ENCODE measurements at regions of chr21 and their contacts with region 1.

Region 1: DNA sequence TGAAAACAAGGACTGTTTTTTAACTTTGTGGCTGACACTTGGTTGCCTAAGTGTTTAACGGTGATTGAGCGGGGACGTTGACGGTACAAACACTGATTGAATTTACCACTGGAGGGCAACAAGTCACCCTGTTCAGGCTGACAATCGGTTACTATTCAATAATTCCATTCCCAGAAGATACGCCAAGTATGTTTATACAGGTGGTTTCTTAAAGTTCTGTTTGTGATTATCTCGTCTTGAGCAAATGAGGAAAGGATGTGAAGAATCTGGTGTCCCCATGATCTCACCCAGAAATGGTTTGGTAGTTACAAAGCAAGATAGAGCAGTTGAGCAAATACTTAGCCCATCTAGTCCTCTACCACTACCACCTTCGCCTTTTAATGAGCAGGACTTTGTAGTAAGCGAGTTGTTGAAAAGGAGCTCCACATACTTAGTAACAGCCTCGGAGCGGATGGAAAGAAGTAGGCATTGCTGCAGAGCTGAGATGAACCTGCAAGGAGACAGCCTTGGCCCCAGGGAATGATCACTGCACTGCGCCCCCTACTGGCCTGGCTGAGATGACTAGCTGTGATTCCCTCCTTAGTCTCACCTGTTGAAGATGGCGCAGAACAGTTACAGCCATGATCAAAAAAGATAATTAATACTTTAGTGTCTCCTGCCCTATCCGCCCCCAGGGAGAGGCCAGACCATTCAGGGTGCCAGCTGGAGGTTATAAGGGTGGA is 36.3 kb downstream of the IFNAR1 start:
- DNase-seq: peak; percentile 92
- ATAC-seq: peak; percentile 82
- H3K4me3 Mint-ChIP-seq: peak overlapping the region; percentile 73
- H3K27ac Mint-ChIP-seq: peak overlapping the region; percentile 69
- H3K4me1 Mint-ChIP-seq: peaks cover 17% of the 10 kb centered on the region
- H3K27me3 Mint-ChIP-seq: no peaks in the 10 kb centered on the region
- CTCF ChIP-seq: peak; percentile 97

Region 2: GRCh38 chr21:33157303-33157702 is 203.7 kb before region 1 on chr21:
- CTCF ChIA-PET with region 1: no interaction called
- POLR2A ChIA-PET with region 1: no interaction called
- intact Hi-C with region 1: no loop called
- DNase-seq: no peak
- ATAC-seq: no peak
- H3K4me3 Mint-ChIP-seq: no peak overlapping the region
- H3K27ac Mint-ChIP-seq: no peak overlapping the region
- H3K4me1 Mint-ChIP-seq: no peaks in the 10 kb centered on the region
- H3K27me3 Mint-ChIP-seq: peaks cover 8% of the 10 kb centered on the region
- CTCF ChIP-seq: no peak

Region 3: GRCh38 chr21:33317145-33317544 is 43.9 kb before region 1 on chr21:
- CTCF ChIA-PET with region 1: interaction called, 10 read pairs
- POLR2A ChIA-PET with region 1: no interaction called
- intact Hi-C with region 1: no loop called
- DNase-seq: no peak
- ATAC-seq: no peak
- H3K4me3 Mint-ChIP-seq: no peak overlapping the region
- H3K27ac Mint-ChIP-seq: no peak overlapping the region
- H3K4me1 Mint-ChIP-seq: no peaks in the 10 kb centered on the region
- H3K27me3 Mint-ChIP-seq: peaks cover 2% of the 10 kb centered on the region
- CTCF ChIP-seq: no peak

Region 4: GRCh38 chr21:33332143-33332542 is 28.9 kb before region 1 on chr21:
- CTCF ChIA-PET with region 1: interaction called, 34 read pairs
- POLR2A ChIA-PET with region 1: interaction called, 3 read pairs
- intact Hi-C with region 1: no loop called
- DNase-seq: no peak
- ATAC-seq: peak; percentile 51
- H3K4me3 Mint-ChIP-seq: no peak overlapping the region
- H3K27ac Mint-ChIP-seq: peak overlapping the region; percentile 14
- H3K4me1 Mint-ChIP-seq: peaks cover 56% of the 10 kb centered on the region
- H3K27me3 Mint-ChIP-seq: no peaks in the 10 kb centered on the region
- CTCF ChIP-seq: no peak

Region 5: GRCh38 chr21:33374450-33375096 is 13.5 kb after region 1 on chr21:
- CTCF ChIA-PET with region 1: interaction called, 35 read pairs
- POLR2A ChIA-PET with region 1: no interaction called
- intact Hi-C with region 1: no loop called
- DNase-seq: peak; percentile 79
- ATAC-seq: peak; percentile 81
- H3K4me3 Mint-ChIP-seq: no peak overlapping the region
- H3K27ac Mint-ChIP-seq: no peak overlapping the region
- H3K4me1 Mint-ChIP-seq: peaks cover 12% of the 10 kb centered on the region
- H3K27me3 Mint-ChIP-seq: no peaks in the 10 kb centered on the region
- CTCF ChIP-seq: peak; percentile 71

Region 6: DNA sequence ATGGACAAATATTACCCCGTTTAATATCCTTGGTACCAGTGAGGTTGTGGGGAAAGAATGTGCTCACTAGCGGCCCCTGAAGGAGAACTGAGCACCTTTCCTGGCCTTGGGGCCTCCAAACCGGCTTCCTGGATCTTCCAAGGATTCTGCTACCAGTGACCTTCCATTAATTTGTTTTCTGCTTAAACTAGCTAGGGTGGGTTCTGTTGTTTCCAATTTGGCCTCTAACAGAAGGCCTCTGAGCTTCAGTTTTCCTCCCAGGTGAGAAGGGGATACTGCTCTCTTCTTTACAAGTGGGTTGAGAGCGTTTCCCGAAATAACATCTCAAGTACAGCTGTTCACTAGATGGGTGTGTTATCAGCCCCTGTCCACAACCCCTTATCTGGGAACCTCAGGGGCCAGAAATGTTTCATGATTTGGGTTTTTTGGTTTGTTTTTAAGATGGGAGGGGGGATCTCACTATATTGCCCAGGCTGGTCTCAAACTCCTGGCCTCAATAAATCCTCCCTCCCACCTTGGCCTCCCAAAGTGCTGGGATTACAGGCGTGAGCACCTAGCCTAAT is 25.3 kb after region 1 on chr21:
- CTCF ChIA-PET with region 1: interaction called, 29 read pairs
- POLR2A ChIA-PET with region 1: interaction called, 6 read pairs
- intact Hi-C with region 1: no loop called
- DNase-seq: no peak
- ATAC-seq: no peak
- H3K4me3 Mint-ChIP-seq: no peak overlapping the region
- H3K27ac Mint-ChIP-seq: no peak overlapping the region
- H3K4me1 Mint-ChIP-seq: peaks cover 40% of the 10 kb centered on the region
- H3K27me3 Mint-ChIP-seq: peaks cover 21% of the 10 kb centered on the region
- CTCF ChIP-seq: peak; percentile 23

Region 7: DNA sequence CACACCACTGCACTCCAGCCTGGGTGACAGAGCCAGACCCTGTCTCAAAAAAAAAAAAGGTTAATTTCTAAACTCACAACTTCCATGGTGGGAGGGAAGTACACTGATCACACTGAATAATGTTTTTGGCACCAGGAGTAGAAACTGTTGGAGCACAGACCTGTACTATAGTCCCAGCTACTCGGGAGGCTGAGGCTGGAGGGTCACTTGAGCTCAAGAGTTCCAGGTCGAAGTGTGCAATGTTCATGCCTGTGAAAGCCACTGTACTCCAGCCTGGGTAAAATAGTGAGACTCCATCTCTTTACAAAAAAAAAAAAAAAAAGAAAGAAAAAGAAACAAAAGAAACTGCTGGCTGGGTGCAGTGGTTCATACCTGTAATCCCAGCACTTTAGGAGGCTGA is 83.5 kb after region 1 on chr21:
- CTCF ChIA-PET with region 1: interaction called, 58 read pairs
- POLR2A ChIA-PET with region 1: interaction called, 11 read pairs
- intact Hi-C with region 1: loop called (anchors 5 kb)
- DNase-seq: no peak
- ATAC-seq: no peak
- H3K4me3 Mint-ChIP-seq: no peak overlapping the region
- H3K27ac Mint-ChIP-seq: no peak overlapping the region
- H3K4me1 Mint-ChIP-seq: peaks cover 7% of the 10 kb centered on the region
- H3K27me3 Mint-ChIP-seq: no peaks in the 10 kb centered on the region
- CTCF ChIP-seq: no peak

Region 8: DNA sequence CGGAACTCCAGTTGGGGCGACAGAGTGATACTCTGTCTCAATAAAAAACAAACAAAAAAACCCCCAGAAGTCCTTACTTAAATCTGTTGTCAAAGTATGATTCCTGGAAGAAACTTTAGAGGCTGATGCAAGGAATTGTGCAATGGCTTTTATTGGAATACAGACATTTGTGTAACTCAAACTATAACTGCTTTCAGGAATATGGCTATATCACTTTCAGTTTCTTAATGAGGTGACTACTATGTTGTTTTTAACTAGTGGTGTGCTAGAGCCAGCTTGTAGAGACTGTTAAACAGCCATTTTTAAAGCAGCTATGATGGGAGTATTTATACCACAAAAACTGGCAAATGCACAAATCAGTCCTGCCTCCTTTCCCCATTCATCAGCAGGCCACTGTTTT is 153.2 kb after region 1 on chr21:
- CTCF ChIA-PET with region 1: no interaction called
- POLR2A ChIA-PET with region 1: no interaction called
- intact Hi-C with region 1: no loop called
- DNase-seq: no peak
- ATAC-seq: no peak
- H3K4me3 Mint-ChIP-seq: no peak overlapping the region
- H3K27ac Mint-ChIP-seq: peak overlapping the region; percentile 51
- H3K4me1 Mint-ChIP-seq: peaks cover 9% of the 10 kb centered on the region
- H3K27me3 Mint-ChIP-seq: no peaks in the 10 kb centered on the region
- CTCF ChIP-seq: no peak

Measured in activated CD8-positive, alpha-beta T cell treated with anti-CD3 and anti-CD28 coated beads for 36 hours (primary cell).